Head of caudate nucleus (tissue), 42 donors: ENCODE measurements at regions of chr15 and their contacts with region 1.

Region 1: GRCh38 chr15:36883713-36884517 is 216.4 kb downstream of the MEIS2 start:
- DNase-seq: peak; percentile 90 to 98 (median 94)

Region 2: DNA sequence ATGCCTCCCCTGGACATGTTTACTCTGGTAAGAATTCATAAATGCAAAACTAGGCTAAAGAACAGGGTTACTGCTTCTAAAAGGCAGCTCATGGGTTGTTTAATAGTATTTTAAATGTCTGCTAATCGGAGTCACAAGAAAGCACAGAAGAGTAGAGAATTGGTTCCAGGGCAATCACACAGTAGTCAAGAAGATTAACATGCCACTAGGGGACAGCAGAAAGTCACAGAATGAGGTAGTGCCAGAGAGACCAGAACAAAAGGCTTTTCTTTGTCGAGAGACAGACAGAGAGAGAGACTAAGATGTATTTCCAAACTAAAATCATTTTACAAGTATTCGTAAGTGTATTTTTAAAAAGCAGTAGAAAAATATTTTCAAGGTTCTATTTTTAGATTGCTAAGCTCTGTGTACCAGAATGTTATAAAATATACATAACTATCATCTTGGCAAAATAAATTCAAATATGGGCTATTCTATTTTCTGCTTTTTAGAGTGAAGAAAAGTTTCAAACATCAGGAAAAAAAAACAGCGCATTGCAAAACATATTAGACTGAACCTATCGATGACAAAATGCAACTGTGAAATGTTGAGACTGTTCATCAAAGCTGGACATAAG is 382.7 kb before region 1 on chr15:
- intact Hi-C with region 1: loop called (anchors 5 kb)
- DNase-seq: peak in 28 of 42 donors; percentile 18 to 88 (median 60)

Region 3: DNA sequence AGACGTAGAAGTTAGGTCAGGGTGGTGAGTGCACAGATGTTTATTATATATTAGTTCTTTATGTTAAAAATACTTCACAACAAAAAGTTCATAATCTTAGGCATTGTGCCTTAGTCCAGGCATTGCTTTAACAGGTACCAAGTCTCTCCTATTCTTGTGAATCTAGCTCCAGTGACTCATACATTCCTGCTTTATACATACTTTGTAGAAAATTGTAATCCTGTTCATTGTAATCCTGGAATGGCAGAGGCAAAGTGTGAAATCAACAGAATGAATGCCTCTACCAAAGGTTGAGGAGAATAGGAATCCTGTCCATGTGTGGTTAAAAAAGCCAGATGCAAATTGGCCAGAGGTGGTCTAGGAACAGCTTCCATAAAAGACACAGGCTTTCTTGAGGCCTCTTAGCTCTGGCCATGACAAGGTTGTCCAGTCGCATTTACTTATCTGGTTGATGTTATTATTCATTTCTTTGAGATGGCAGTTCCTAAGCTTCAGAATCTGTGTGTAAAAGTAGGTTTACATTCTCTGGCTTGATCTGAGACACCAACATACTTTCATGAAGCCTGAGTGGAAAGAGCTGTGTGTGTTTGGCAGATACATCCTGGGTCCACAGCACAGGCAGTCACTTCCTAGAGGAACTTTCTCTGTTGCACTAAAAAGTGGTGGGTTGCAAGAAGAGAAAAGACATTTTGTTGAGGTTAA is 195.5 kb before region 1 on chr15:
- intact Hi-C with region 1: no loop called
- DNase-seq: no peak

Region 4: GRCh38 chr15:36831125-36831903 is 52.6 kb before region 1 on chr15:
- intact Hi-C with region 1: no loop called
- DNase-seq: no peak

Region 5: GRCh38 chr15:37106490-37107001 is 222.6 kb after region 1 on chr15:
- intact Hi-C with region 1: loop called (anchors 2 kb)
- DNase-seq: peak in 39 of 42 donors; percentile 53 to 91 (median 78)

Region 6: DNA sequence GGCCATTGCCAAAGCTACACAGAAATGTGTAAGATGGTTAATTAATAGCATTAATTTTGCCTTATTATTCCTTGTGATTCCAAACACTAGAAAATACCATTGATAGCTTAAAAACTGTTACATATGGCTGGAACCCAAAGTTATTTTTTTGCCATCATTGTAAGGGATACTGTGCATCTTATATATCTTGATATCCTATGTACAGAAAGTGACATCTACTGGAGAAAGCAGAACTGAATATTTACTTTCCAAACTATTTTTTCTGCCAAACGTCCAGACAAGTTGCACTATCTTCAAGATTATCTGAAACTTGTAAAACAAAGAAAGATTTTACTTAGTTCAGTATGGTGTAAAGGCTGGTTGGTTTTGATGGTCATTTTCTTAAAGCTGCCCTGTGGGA is 249.7 kb after region 1 on chr15:
- intact Hi-C with region 1: loop called (anchors 1 kb)
- DNase-seq: no peak

Region 7: DNA sequence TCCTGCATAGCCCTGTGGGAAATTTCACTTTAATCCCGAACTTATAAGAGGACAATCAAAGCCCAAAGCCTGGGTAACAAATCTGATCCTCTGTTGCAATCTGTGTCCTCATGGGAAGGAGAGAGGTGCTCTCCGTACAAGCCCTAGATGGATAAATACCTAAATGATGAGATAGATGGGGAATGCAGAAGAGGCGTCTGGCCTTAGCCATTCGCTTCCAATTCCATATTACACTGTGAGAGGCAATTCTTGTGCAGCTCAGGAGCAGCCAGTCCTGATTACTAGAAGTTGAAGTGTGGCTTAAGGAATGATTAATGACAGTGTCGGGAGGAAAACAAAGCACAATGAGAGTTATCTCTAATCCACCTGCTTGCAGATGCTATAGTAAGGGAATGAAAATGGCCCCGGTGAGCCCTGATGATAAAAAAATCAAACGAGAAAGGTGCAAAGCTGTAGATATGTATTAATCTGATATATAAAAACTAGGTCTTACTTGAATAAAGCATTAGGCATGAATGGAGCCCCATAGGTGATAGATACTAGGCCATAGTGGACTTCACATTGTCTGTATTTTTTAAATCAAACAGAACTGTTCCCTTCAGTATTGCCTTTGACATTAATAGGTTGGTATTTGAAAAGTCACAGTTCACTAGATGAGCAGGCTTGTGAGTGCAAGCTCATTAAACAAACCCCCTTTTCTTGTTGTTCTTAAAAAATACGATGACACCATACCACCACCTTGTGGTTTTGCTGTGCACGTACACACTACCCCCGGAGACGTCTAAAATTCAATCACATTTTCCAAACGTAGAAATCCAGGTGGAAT is 996.3 kb after region 1 on chr15:
- intact Hi-C with region 1: loop called (anchors 10 kb)
- DNase-seq: peak in 22 of 42 donors; percentile 5 to 65 (median 38)